ENCODE measurements at regions of chr4 and their contacts with region 1.

Region 1: DNA sequence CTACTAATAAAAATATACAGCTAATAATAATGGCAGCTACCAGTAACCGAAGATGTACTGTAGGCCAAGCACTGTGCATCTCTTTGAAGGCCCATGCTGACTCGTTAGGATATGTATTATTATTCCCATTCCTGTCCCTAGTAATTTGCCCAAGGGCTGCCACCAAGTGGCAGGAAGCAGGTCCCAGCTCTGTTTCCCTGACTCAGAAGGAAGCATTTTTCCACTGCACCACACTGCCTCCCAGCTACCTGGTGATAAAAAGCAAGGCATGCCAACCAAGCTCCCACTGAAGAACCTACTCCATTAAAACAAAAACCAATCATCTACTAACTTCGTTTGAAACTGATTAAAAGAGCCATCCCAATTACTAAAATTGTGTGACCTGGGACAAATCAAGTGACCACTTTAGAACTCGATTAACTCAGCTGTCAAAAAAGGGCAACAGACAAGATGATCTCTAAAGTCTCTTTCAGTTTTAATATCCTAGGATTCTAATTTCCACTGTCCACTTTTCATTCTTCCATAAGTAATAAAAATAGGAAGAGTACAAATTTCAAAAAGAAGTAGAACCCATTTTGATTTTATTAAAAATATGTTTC is 24.3 kb upstream of the PGM2 start:
- DNase-seq: peak; percentile 71
- H3K4me3 ChIP-seq: no peak overlapping the region
- H3K27ac ChIP-seq: no peak overlapping the region
- H3K4me1 ChIP-seq: no peaks in the 10 kb centered on the region
- H3K27me3 ChIP-seq: no peaks in the 10 kb centered on the region
- CTCF ChIP-seq: peak; percentile 70

Region 2: DNA sequence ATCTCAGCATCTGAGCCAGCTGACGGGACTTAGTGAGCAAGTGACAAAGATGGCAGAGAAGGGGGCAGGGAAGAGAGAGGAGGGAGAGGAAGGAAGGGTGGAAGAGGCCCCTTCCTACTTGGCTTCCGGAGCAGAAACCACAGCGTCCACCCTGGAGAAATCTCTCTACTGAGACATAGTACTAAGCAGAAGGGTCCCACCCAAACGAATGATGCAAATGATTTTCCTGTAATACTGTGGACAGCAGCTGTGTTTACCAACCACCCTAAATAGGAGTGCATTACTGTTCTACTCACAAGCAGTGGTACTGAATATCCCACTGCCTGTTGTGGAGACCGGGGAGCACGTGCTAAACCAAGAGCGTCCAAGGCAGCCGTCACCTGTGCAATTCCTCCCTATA is 1491.4 kb before region 1 on chr4:
- CTCF ChIA-PET with region 1: no interaction called
- POLR2A ChIA-PET with region 1: no interaction called
- intact Hi-C with region 1: no loop called
- DNase-seq: peak; percentile 3
- H3K4me3 ChIP-seq: no peak overlapping the region
- H3K27ac ChIP-seq: no peak overlapping the region
- H3K4me1 ChIP-seq: no peaks in the 10 kb centered on the region
- H3K27me3 ChIP-seq: no peaks in the 10 kb centered on the region
- CTCF ChIP-seq: no peak

Region 3: DNA sequence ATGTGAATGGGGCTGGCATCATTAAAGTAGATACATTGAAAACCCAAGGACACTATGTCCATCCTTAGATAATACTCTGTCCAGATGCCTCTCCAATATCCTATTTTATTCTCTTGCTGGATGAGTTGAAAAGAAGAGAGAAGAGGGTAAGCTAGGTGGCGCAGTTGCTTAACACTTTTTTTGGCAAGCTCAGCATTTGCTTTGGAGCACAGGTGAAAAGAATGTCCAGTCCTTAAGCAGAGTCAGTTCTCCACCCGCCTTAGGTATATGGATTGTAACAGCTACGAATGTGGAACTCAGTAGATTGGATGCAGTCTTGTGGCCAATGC is 349.3 kb before region 1 on chr4:
- CTCF ChIA-PET with region 1: no interaction called
- POLR2A ChIA-PET with region 1: no interaction called
- intact Hi-C with region 1: loop called (anchors 5 kb)
- DNase-seq: peak; percentile 55
- H3K4me3 ChIP-seq: no peak overlapping the region
- H3K27ac ChIP-seq: no peak overlapping the region
- H3K4me1 ChIP-seq: peaks cover 5% of the 10 kb centered on the region
- H3K27me3 ChIP-seq: peaks cover 89% of the 10 kb centered on the region
- CTCF ChIP-seq: peak; percentile 74

Region 4: GRCh38 chr4:37603070-37603468 is 199.1 kb before region 1 on chr4:
- CTCF ChIA-PET with region 1: interaction called, 8 read pairs
- POLR2A ChIA-PET with region 1: no interaction called
- intact Hi-C with region 1: loop called (anchors 1 kb)
- DNase-seq: peak; percentile 67
- H3K4me3 ChIP-seq: no peak overlapping the region
- H3K27ac ChIP-seq: no peak overlapping the region
- H3K4me1 ChIP-seq: peaks cover 8% of the 10 kb centered on the region
- H3K27me3 ChIP-seq: no peaks in the 10 kb centered on the region
- CTCF ChIP-seq: peak; percentile 98

Region 5: GRCh38 chr4:37977471-37978247 is 175.5 kb after region 1 on chr4:
- CTCF ChIA-PET with region 1: no interaction called
- POLR2A ChIA-PET with region 1: no interaction called
- intact Hi-C with region 1: loop called (anchors 10 kb)
- DNase-seq: peak; percentile 63
- H3K4me3 ChIP-seq: peak overlapping the region; percentile 82
- H3K27ac ChIP-seq: peak overlapping the region; percentile 58
- H3K4me1 ChIP-seq: peaks cover 8% of the 10 kb centered on the region
- H3K27me3 ChIP-seq: no peaks in the 10 kb centered on the region
- CTCF ChIP-seq: peak; percentile 64

Region 6: GRCh38 chr4:38034986-38035882 is 233.1 kb after region 1 on chr4:
- CTCF ChIA-PET with region 1: interaction called, 4 read pairs
- POLR2A ChIA-PET with region 1: no interaction called
- intact Hi-C with region 1: loop called (anchors 1 kb)
- DNase-seq: peak; percentile 79
- H3K4me3 ChIP-seq: no peak overlapping the region
- H3K27ac ChIP-seq: no peak overlapping the region
- H3K4me1 ChIP-seq: no peaks in the 10 kb centered on the region
- H3K27me3 ChIP-seq: no peaks in the 10 kb centered on the region
- CTCF ChIP-seq: peak; percentile 74

Region 7: DNA sequence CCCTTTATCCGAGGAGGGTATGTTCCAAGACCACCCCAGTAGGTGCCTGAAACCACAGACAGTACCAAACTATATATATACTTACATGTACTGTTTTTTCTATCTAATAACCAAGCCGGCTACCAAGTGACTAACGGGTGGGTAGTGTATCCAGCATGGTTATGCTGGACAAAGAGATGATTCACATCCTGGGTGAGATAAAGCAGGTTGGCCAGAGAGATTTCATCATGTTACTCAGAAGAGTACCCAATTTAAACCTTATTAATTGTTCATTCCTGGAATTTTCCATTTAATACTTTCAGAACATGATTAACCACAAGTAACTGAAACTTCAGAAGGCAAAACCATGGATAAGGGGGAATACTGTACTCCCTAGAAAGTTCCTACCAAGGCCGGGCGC is 1517.5 kb after region 1 on chr4:
- CTCF ChIA-PET with region 1: no interaction called
- POLR2A ChIA-PET with region 1: no interaction called
- intact Hi-C with region 1: no loop called
- DNase-seq: no peak
- H3K4me3 ChIP-seq: no peak overlapping the region
- H3K27ac ChIP-seq: no peak overlapping the region
- H3K4me1 ChIP-seq: no peaks in the 10 kb centered on the region
- H3K27me3 ChIP-seq: no peaks in the 10 kb centered on the region
- CTCF ChIP-seq: no peak